Gastrocnemius medialis (tissue), 4 donors: ENCODE measurements at regions of chr15 and their contacts with region 1.

Region 1: GRCh38 chr15:66386204-66387123 is at the start of gene MAP2K1:
- DNase-seq: peak; percentile 98
- ATAC-seq: peak; percentile 92 to 96
- H3K4me3 ChIP-seq: peak within 1 kb of the TSS; percentile 80 to 88 (median 84)
- H3K27ac ChIP-seq: peak within 1 kb of the TSS; percentile 91 to 96 (median 94)
- H3K4me1 ChIP-seq: peaks cover 34 to 40% of the 10 kb centered on the region in 2 donors
- H3K27me3 ChIP-seq: no peaks in the 10 kb centered on the region
- CTCF ChIP-seq: peak; percentile 49 to 77 (median 60)
- POLR2A ChIP-seq: peak; percentile 83 to 85
- total RNA-seq, gene MAP2K1: 50.4 to 112 (median 69.5) TPM

Region 2: DNA sequence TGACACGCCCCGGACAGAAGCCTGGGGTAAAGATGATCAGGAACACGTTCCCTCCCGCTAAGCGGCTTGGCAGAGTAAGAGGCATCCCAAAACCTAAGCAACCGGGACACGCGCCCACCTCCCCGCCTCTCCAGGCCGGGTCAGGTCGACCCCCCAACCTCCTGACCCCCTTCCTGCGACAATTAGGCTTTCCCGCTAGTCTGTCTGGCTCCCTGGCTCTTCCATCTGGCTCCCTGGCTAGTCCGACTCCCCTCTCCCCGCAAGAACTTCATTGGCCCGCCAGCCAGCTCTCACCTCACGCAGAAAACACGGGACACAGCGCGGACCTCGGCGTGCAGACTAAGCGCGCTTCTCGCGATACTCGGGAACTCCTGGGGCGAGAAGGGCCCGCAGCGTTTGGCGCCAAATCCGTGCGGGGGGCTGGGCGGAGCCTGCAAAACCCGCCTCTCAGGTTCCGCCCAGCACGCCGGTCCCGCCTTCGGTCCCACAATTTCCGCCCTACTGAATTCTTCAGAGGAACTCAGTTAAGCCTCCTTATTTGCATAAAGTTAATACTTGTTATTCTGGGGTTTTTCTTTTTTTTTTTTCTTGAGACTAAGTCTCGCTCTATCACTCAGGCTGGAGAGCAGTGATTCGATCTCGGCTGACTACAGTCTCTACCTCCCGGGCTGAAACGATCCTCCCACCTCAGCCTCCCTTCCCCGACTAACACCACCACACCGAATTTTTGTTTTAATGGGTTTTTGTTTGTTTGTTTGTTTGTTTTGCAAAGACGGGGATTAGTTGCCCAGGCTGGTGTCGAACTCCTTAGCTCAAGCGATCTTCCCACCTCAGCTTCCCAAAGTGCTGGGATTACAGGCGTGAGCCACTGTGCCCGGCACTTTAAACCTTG is 29.9 kb before region 1 on chr15 and contains the start of gene TIPIN:
- in situ Hi-C with region 1: no loop called
- intact Hi-C with region 1: loop called (anchors 1 kb)
- DNase-seq: peak; percentile 83 to 90
- ATAC-seq: peak; percentile 95 to 98
- H3K4me3 ChIP-seq: peak within 1 kb of the TSS; percentile 71 to 82 (median 77)
- H3K27ac ChIP-seq: peak within 1 kb of the TSS; percentile 76 to 80 (median 79)
- H3K4me1 ChIP-seq: peaks cover 0 to 5% of the 10 kb centered on the region in 2 donors
- H3K27me3 ChIP-seq: no peaks in the 10 kb centered on the region
- CTCF ChIP-seq: no peak
- POLR2A ChIP-seq: peak in 1 of 2 donors; percentile 11
- total RNA-seq, gene TIPIN: 0.66 to 6.0 (median 3.6) TPM

Region 3: DNA sequence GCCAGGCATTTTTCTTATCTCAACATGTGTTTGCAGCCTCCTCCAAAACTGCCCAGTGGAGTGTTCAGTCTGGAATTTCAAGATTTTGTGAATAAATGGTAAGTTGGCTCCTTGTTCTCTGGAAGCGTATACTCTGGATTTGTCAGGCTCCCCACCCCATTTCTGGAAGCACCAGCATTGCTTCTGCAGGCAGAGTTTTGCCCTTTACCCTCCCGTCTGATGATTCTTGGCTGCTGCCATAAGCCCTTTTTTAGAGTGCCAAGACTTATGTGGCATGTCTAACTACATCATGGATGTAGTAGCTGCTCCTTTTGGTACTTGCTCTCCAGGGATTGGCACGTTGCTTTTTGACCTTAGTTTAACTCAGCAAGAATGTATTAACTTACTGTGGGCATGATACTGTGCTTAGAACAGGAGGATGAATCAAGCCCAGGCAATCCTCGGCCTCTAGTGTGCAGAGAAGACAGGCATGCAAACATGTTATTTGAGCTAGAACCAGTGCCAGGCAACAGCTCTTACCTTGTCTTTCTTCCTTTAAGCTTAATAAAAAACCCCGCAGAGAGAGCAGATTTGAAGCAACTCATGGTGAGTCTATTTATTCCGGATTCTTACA is 102.8 kb after region 1 on chr15:
- in situ Hi-C with region 1: loop called in 2 of 4 experiments (anchors 5 to 10 kb)
- intact Hi-C with region 1: no loop called
- DNase-seq: no peak
- ATAC-seq: peak in 1 of 2 donors; percentile 54
- H3K4me3 ChIP-seq: no peak overlapping the region
- H3K27ac ChIP-seq: no peak overlapping the region
- H3K4me1 ChIP-seq: peaks cover 4 to 17% of the 10 kb centered on the region in 2 donors
- H3K27me3 ChIP-seq: no peaks in the 10 kb centered on the region
- CTCF ChIP-seq: no peak
- POLR2A ChIP-seq: no peak

Region 4: GRCh38 chr15:66504563-66505429 is 118.3 kb after region 1 on chr15 and contains the starts of genes RPL4 and ZWILCH:
- in situ Hi-C with region 1: loop called in 3 of 4 experiments (anchors 5 to 10 kb)
- intact Hi-C with region 1: loop called (anchors 2 kb)
- DNase-seq: peak; percentile 41 to 67
- ATAC-seq: peak; percentile 93 to 95
- H3K4me3 ChIP-seq: peak within 1 kb of the TSS; percentile 74 to 95 (median 87)
- H3K27ac ChIP-seq: peak within 1 kb of the TSS; percentile 85 to 96 (median 92)
- H3K4me1 ChIP-seq: peaks cover 22 to 24% of the 10 kb centered on the region in 2 donors
- H3K27me3 ChIP-seq: no peaks in the 10 kb centered on the region
- CTCF ChIP-seq: peak in 2 of 5 experiments; percentile 14 to 38
- POLR2A ChIP-seq: peak; percentile 96 to 99
- total RNA-seq, gene RPL4: 2,613 to 4,567 (median 3,688) TPM
- total RNA-seq, gene ZWILCH: 2.0 to 10.6 (median 2.4) TPM

Region 5: GRCh38 chr15:66700802-66701421 is 314.4 kb after region 1 on chr15:
- in situ Hi-C with region 1: no loop called
- intact Hi-C with region 1: loop called (anchors 10 kb)
- DNase-seq: peak; percentile 92 to 96
- ATAC-seq: peak; percentile 80 to 86
- H3K4me3 ChIP-seq: peak overlapping the region; percentile 62 to 93 (median 84)
- H3K27ac ChIP-seq: peak overlapping the region; percentile 66 to 87 (median 84)
- H3K4me1 ChIP-seq: peaks cover 6 to 12% of the 10 kb centered on the region in 2 donors
- H3K27me3 ChIP-seq: peaks cover 0 to 5% (median 0%) of the 10 kb centered on the region in 3 donors
- CTCF ChIP-seq: no peak
- POLR2A ChIP-seq: peak in 1 of 2 donors; percentile 21